A549 (cell line): ENCODE measurements at regions of chrX and their contacts with region 1.

Region 1: DNA sequence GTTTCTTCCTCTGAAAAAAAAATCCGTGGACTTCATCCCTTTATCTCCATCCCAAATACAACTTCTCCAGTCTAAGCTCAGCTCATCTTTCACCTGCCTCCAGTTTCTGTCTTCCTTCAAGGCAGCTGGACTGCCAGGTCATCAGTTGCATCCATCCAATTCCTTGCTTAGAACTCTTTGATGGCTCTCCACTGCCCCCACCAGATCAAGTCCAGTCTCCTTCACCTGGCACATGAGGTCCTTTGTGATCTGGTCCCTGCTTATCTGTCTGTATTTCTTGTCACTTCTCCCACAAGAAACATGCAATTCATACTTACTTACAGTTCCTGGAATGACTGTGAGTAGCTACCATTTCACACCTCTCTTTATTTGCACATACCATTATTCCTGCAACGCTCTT is 33.8 kb downstream of the OTUD6A start:
- DNase-seq: peak in 1 of 2 experiments; percentile 37
- ATAC-seq: peak; percentile 43 to 70; a peak in 2 of 6 replicates
- H3K4me3 ChIP-seq: no peak overlapping the region
- H3K27ac ChIP-seq: no peak overlapping the region
- H3K4me1 ChIP-seq: no peaks in the 10 kb centered on the region
- CTCF ChIP-seq: peak; percentile 16; the same call in 1 of the 3 replicates
- EP300 ChIP-seq: no peak
- POLR2A ChIP-seq: no peak
- RAD21 ChIP-seq: peak; percentile 27 to 52; a peak in 4 of 5 replicates

Region 2: DNA sequence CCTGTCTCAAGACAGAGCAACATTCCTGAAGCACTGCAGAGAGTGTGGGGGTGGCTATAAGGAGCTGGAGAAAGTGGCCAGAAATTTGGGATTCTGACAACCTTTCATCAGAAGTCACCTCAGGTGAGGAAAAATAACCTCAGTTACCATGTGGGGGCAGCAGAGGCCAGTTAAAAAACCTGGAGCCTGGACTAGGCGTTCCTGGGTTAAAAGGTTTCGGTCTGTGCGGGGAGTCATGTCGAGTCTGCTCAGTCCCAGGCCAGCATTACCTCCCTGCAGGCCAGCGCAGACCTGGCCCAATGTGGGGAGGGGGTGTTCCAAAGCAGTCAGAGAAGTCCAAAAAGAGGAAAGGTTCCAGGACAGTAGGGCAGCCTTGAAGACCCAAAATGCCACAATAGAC is 602.9 kb before region 1 on chrX:
- CTCF ChIA-PET with region 1: interaction called, 55 read pairs
- POLR2A ChIA-PET with region 1: no interaction called
- DNase-seq: peak; percentile 30 to 35
- ATAC-seq: peak; percentile 80 to 92
- H3K4me3 ChIP-seq: no peak overlapping the region
- H3K27ac ChIP-seq: no peak overlapping the region
- H3K4me1 ChIP-seq: peaks cover 5% of the 10 kb centered on the region; the same call in 1 of the 3 replicates
- CTCF ChIP-seq: peak; percentile 54
- EP300 ChIP-seq: no peak
- POLR2A ChIP-seq: no peak
- RAD21 ChIP-seq: peak; percentile 67 to 70

Region 3: GRCh38 chrX:69876221-69876620 is 219.8 kb before region 1 on chrX:
- CTCF ChIA-PET with region 1: no interaction called
- POLR2A ChIA-PET with region 1: no interaction called
- DNase-seq: no peak
- ATAC-seq: no peak
- H3K4me3 ChIP-seq: no peak overlapping the region
- H3K27ac ChIP-seq: no peak overlapping the region
- H3K4me1 ChIP-seq: no peaks in the 10 kb centered on the region
- CTCF ChIP-seq: no peak
- EP300 ChIP-seq: no peak
- POLR2A ChIP-seq: no peak
- RAD21 ChIP-seq: no peak

Region 4: DNA sequence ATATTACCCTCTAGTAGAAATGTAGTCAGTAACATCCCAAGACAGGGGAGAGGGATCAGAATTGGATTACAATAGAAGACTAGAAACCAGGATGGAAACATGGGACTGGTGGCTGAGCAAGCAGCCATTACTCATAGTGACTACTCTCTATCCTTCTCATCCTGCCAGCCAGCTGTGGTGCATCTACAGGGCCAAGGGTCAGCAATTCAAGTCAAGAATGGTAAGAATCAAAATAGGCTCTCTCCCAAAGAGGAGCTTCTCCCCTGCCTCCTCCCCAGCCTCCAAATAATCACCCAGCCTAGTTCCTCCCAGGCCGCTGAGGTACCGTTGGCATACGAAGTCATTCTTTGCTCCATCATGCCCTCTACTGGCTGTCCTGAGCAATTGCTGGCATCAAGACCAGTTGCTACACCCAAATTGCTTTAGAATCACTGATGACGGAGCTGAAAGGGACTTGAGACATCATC is 65.7 kb before region 1 on chrX:
- CTCF ChIA-PET with region 1: interaction called, 39 read pairs
- POLR2A ChIA-PET with region 1: no interaction called
- DNase-seq: peak; percentile 51 to 61
- ATAC-seq: peak; percentile 77 to 89
- H3K4me3 ChIP-seq: no peak overlapping the region
- H3K27ac ChIP-seq: no peak overlapping the region
- H3K4me1 ChIP-seq: no peaks in the 10 kb centered on the region
- CTCF ChIP-seq: no peak; the same call in 1 of the 3 replicates
- EP300 ChIP-seq: no peak
- POLR2A ChIP-seq: no peak
- RAD21 ChIP-seq: peak; percentile 63 to 65

Region 5: DNA sequence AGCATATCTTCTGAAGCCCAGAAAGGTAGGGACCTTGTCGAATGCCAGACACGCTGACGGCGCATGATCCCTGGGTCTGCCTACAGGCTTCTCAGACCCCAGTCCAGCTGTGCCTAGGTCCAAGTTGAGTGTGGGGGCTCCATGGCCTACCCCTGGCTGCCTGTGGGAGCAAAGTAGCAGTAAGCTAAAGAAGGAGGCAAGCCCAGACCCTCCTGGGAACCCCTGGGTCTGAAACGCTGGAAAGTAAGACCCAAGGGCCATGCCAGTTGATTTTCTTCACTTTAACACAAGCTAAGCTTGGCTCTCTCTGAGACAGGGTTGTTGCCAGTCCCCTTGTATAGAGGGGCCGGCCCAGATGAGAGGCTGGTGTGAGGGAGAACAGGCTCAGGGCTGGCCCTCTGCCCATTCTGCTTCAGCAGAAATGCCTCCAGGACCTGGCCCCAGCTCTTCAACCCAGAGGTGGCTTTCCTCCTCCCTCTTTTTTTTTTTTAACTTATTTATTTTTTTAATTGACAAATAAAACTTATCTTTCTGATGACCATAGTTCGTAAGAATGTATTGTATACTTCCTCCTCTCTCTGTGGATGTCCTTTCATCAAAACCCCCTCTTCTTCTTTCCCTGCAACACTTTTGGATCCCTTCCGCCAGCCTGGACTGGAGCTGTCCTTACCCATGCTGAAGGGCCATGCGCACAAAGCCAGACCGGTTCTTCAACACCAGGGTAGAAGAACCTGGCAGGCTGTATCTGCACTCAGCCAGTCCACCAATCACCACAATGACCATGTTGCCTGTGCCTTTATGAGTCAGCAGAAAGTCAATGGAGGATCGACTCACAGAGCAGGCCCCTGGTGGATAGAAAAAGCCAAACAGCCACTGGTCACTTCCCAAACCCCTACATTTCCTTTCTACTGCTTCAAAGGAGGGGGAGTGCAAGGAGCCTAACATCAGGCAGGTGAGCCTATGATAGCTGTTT is 53.4 kb before region 1 on chrX:
- CTCF ChIA-PET with region 1: interaction called, 12 read pairs
- POLR2A ChIA-PET with region 1: no interaction called
- DNase-seq: peak in 1 of 2 experiments; percentile 30
- ATAC-seq: peak in 1 of 2 experiments; percentile 69; a peak in 3 of 6 replicates
- H3K4me3 ChIP-seq: no peak overlapping the region
- H3K27ac ChIP-seq: no peak overlapping the region
- H3K4me1 ChIP-seq: peaks cover 7% of the 10 kb centered on the region; the same call in 1 of the 3 replicates
- CTCF ChIP-seq: no peak
- EP300 ChIP-seq: no peak
- POLR2A ChIP-seq: no peak
- RAD21 ChIP-seq: no peak

Region 6: DNA sequence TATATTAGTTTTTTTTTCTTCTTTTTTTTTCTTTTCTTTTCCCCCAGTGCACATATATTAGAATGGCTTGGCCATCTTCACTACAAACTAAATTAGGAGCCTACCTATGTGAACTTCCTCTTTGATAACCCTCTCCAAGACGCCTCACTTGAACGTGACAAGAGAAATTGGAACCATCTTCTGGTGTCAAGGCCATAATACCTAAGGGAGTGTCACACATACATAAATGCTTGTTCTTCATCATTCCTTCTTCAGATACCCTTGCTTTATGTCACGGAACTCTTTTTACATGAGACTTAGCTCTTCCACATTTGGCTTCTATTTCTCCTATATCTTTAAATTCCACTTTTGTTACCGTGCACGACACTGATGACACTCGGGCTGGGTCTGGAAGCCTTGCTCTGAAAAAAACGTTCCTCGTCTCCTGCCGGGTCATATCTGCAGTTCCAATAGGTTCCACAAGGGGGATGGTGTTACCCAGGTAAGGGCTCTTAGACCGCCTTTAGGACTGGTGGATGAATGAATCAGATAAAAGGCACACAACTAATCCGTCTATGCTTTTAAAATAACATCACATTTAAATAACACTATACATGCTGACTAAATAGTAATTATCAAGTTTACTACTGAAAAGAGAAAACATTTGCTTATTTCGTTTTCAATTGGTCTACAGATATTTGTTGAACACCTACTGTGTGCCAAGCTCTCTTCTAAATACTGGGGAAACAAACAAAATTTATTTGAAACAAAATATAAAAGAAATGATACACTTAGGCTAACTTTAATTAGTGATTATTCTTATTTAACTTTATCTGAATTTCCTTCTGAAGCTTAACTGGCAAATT is 101.1 kb after region 1 on chrX:
- CTCF ChIA-PET with region 1: no interaction called
- POLR2A ChIA-PET with region 1: no interaction called
- DNase-seq: peak; percentile 42 to 77
- ATAC-seq: peak; percentile 92
- H3K4me3 ChIP-seq: no peak overlapping the region
- H3K27ac ChIP-seq: no peak overlapping the region
- H3K4me1 ChIP-seq: no peaks in the 10 kb centered on the region
- CTCF ChIP-seq: peak; percentile 57
- EP300 ChIP-seq: no peak
- POLR2A ChIP-seq: no peak
- RAD21 ChIP-seq: peak; percentile 60 to 70